A549 (cell line): ENCODE measurements at regions of chr3 and their contacts with region 1.

Region 1: GRCh38 chr3:50227390-50228183 is 8.4 kb upstream of the GNAI2 start:
- DNase-seq: peak; percentile 87 to 91
- ATAC-seq: peak; percentile 88 to 89
- H3K4me3 ChIP-seq: peak overlapping the region; percentile 59
- H3K27ac ChIP-seq: peak overlapping the region; percentile 82 to 97
- H3K4me1 ChIP-seq: peaks cover 8% of the 10 kb centered on the region; the same call in 1 of the 3 replicates
- CTCF ChIP-seq: peak; percentile 91
- EP300 ChIP-seq: no peak
- POLR2A ChIP-seq: no peak; the same call in 1 of the 2 replicates
- RAD21 ChIP-seq: peak; percentile 68 to 94

Region 2: DNA sequence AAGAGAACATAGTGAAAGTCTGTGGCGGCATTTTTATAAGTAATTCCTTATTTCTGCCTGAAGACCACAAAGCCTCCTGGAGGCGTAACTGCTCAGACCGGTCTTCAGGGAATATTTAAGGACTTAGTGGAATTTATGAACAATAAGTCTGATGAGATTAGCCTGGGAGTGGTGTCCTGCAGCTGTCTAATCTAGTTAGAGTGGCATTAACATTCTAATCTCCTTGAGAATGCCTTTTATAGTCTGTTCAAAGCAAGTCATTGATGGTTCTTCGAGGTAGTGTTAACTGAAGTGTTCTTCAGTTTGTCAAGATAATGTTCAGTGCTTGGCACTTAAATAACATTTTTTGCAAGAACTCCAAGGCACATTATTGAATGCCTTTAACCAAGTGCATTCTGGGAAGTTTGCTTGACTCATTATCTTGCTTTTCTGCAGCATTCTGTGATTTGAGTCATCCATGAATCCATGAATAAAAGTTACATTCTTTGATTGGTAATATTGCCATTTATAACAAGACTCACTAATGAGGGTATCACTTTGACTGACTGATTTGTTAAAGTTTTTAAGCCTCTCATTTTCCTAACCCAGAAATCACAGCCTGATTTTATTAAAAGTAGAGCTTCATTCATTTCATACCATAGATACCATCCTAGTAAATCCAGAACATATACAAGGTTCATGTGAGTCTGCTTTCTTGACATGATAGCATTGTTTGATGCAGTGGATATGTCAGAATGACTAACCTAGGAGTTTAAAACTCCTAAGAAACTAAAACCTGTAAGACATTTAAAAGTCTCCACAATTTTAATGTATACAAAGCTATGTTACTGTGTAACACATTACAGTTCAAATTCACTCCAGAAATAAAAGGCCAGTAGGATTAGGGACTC is 126.4 kb before region 1 on chr3:
- CTCF ChIA-PET with region 1: no interaction called
- POLR2A ChIA-PET with region 1: no interaction called
- DNase-seq: no peak
- ATAC-seq: no peak
- H3K4me3 ChIP-seq: no peak overlapping the region
- H3K27ac ChIP-seq: no peak overlapping the region
- H3K4me1 ChIP-seq: no peaks in the 10 kb centered on the region
- CTCF ChIP-seq: no peak
- EP300 ChIP-seq: no peak
- POLR2A ChIP-seq: no peak
- RAD21 ChIP-seq: no peak

Region 3: DNA sequence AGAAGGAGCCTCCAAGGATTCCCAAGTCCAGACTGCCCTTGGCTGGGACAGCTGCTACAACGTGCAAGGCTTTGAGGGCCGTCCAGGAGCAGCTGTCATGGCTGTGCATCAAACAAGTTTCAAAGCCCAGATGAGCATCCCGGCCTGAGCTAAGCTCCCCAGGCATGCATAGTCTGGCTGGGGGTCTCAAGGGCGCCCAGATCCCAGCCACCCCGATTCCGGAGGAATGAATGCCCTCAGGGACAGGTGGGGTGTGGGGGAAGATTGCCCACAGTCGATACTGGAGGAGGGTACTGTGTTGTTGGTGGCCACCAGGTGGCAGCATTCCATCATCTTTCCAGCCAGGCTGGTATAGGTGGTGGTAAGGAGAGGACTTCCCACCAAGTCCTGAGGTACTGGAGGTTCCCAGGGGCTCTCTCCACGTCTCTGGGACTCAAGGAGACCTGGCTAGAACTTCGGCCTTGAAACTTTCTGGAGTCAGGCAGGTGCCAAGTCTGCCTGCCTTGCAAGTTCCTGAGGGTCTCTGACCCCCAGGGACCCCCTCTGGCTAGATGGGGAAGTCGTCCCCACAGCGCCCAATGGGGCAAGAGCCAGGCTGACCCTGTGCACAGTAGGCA is 106.1 kb before region 1 on chr3:
- CTCF ChIA-PET with region 1: interaction called, 54 read pairs
- POLR2A ChIA-PET with region 1: interaction called, 3 read pairs
- DNase-seq: peak; percentile 77 to 91
- ATAC-seq: peak; percentile 78 to 91
- H3K4me3 ChIP-seq: no peak overlapping the region
- H3K27ac ChIP-seq: no peak overlapping the region
- H3K4me1 ChIP-seq: peaks cover 20% of the 10 kb centered on the region
- CTCF ChIP-seq: peak; percentile 74
- EP300 ChIP-seq: no peak
- POLR2A ChIP-seq: no peak
- RAD21 ChIP-seq: peak; percentile 83 to 90

Region 4: DNA sequence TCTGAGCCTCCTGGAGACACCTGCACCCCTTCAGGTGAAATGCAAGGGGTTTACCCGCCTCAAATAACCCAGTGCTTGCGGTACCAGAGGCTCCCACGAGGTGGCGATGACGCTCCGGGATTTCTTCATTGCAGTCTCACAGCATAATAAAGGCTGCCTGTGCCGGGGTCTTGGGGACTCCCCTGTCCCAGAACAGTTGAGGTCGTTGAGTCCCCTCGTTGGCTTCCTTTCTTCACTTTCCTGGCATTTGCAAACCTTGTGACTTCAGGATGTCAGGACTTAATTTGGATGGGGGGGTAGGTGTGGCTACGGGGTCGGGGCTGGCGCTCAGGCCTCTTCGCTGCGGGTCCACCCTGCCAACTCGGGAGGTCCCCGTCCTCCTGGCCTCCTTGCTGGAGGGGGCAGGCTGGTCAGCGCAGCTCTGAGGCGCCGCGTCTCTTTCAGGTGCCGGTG is 34.9 kb before region 1 on chr3:
- CTCF ChIA-PET with region 1: interaction called, 550 read pairs
- POLR2A ChIA-PET with region 1: interaction called, 5 read pairs
- DNase-seq: peak; percentile 50 to 56
- ATAC-seq: peak; percentile 30 to 66; a peak in 3 of 6 replicates
- H3K4me3 ChIP-seq: no peak overlapping the region
- H3K27ac ChIP-seq: no peak overlapping the region
- H3K4me1 ChIP-seq: peaks cover 13% of the 10 kb centered on the region; the same call in 2 of the 3 replicates
- CTCF ChIP-seq: peak; percentile 72
- EP300 ChIP-seq: no peak
- POLR2A ChIP-seq: no peak
- RAD21 ChIP-seq: peak; percentile 78

Region 5: DNA sequence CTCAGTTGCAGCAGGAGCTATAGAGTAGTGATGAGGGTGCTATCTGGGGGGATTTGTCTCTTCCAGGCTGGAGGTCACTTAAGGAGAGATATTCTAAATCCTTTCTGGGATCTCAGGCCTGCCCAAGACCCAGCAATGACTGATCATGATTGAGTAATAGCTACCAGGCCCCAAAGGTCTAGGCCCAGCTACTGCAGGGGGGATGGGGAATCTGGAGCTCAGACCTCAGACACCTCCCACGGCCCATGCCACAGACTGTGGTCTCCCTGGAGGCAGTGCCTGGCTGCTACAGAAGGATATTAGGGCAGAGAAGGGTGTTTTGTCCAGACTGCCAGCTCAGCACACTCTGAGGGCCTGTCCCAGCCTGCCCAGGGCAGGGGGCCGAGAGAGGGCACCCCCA is 15.7 kb before region 1 on chr3:
- CTCF ChIA-PET with region 1: interaction called, 64 read pairs
- POLR2A ChIA-PET with region 1: no interaction called
- DNase-seq: no peak
- ATAC-seq: no peak
- H3K4me3 ChIP-seq: no peak overlapping the region
- H3K27ac ChIP-seq: peak overlapping the region in 1 of 2 experiments; percentile 57; a peak in 2 of 6 replicates
- H3K4me1 ChIP-seq: no peaks in the 10 kb centered on the region
- CTCF ChIP-seq: no peak
- EP300 ChIP-seq: no peak
- POLR2A ChIP-seq: no peak
- RAD21 ChIP-seq: no peak

Region 6: GRCh38 chr3:50260027-50260941 is 32.7 kb after region 1 on chr3:
- CTCF ChIA-PET with region 1: interaction called, 219 read pairs
- POLR2A ChIA-PET with region 1: no interaction called
- DNase-seq: peak; percentile 68 to 85
- ATAC-seq: peak; percentile 83 to 88
- H3K4me3 ChIP-seq: peak overlapping the region; percentile 85
- H3K27ac ChIP-seq: peak overlapping the region; percentile 94 to 99
- H3K4me1 ChIP-seq: peaks cover 34% of the 10 kb centered on the region
- CTCF ChIP-seq: peak; percentile 83
- EP300 ChIP-seq: no peak
- POLR2A ChIP-seq: peak; percentile 50
- RAD21 ChIP-seq: peak; percentile 57 to 77

Region 7: GRCh38 chr3:50278868-50279224 is 51.3 kb after region 1 on chr3 and contains the start of gene LSMEM2:
- CTCF ChIA-PET with region 1: interaction called, 13 read pairs
- POLR2A ChIA-PET with region 1: no interaction called
- DNase-seq: no peak
- ATAC-seq: peak in 1 of 2 experiments; percentile 10; a peak in 1 of 6 replicates
- H3K4me3 ChIP-seq: no peak within 1 kb of the TSS
- H3K27ac ChIP-seq: no peak within 1 kb of the TSS
- H3K4me1 ChIP-seq: no peaks in the 10 kb centered on the region
- CTCF ChIP-seq: no peak
- EP300 ChIP-seq: no peak
- POLR2A ChIP-seq: no peak
- RAD21 ChIP-seq: no peak
- polyA plus RNA-seq, gene LSMEM2: not detected in 2 replicates